ENCODE measurements at regions of chr3 and their contacts with region 1.

Region 1: GRCh38 chr3:16048435-16049318 is 125.8 kb upstream of the GALNT15 start:
- DNase-seq: peak; percentile 41 to 85
- H3K4me3 ChIP-seq: peak overlapping the region in 3 of 4 donors; percentile 9 to 29 (median 14)
- H3K27ac ChIP-seq: no peak overlapping the region
- H3K4me1 ChIP-seq: peaks cover 0 to 9% (median 2%) of the 10 kb centered on the region in 4 donors
- H3K27me3 ChIP-seq: no peaks in the 10 kb centered on the region
- CTCF ChIP-seq: peak in 5 of 7 experiments; percentile 52 to 73 (median 67)
- EP300 ChIP-seq: no peak
- POLR2A ChIP-seq: no peak

Region 2: GRCh38 chr3:15845475-15845874 is 203.2 kb before region 1 on chr3:
- intact Hi-C with region 1: no loop called
- DNase-seq: no peak
- H3K4me3 ChIP-seq: no peak overlapping the region
- H3K27ac ChIP-seq: no peak overlapping the region
- H3K4me1 ChIP-seq: peaks cover 0 to 13% (median 0%) of the 10 kb centered on the region in 4 donors
- H3K27me3 ChIP-seq: no peaks in the 10 kb centered on the region
- CTCF ChIP-seq: no peak
- EP300 ChIP-seq: no peak
- POLR2A ChIP-seq: no peak

Region 3: GRCh38 chr3:16177962-16178627 is 129.4 kb after region 1 on chr3:
- intact Hi-C with region 1: loop called (anchors 5 kb)
- DNase-seq: peak; percentile 79 to 92
- H3K4me3 ChIP-seq: peak overlapping the region; percentile 33 to 55 (median 40)
- H3K27ac ChIP-seq: no peak overlapping the region
- H3K4me1 ChIP-seq: peaks cover 5 to 33% (median 23%) of the 10 kb centered on the region in 4 donors
- H3K27me3 ChIP-seq: no peaks in the 10 kb centered on the region
- CTCF ChIP-seq: peak in 6 of 7 experiments; percentile 10 to 94 (median 92)
- EP300 ChIP-seq: no peak
- POLR2A ChIP-seq: no peak

Region 4: GRCh38 chr3:16240283-16241023 is 191.8 kb after region 1 on chr3:
- intact Hi-C with region 1: loop called (anchors 5 kb)
- DNase-seq: no peak
- H3K4me3 ChIP-seq: no peak overlapping the region
- H3K27ac ChIP-seq: peak overlapping the region in 3 of 5 donors; percentile 5 to 44 (median 13)
- H3K4me1 ChIP-seq: peaks cover 0 to 14% (median 7%) of the 10 kb centered on the region in 4 donors
- H3K27me3 ChIP-seq: no peaks in the 10 kb centered on the region
- CTCF ChIP-seq: no peak
- EP300 ChIP-seq: no peak
- POLR2A ChIP-seq: no peak

Region 5: GRCh38 chr3:16300881-16301359 is 252.2 kb after region 1 on chr3:
- intact Hi-C with region 1: no loop called
- DNase-seq: peak in 1 of 2 donors; percentile 59
- H3K4me3 ChIP-seq: no peak overlapping the region
- H3K27ac ChIP-seq: peak overlapping the region in 3 of 5 donors; percentile 44 to 61 (median 46)
- H3K4me1 ChIP-seq: peaks cover 0 to 7% (median 0%) of the 10 kb centered on the region in 4 donors
- H3K27me3 ChIP-seq: no peaks in the 10 kb centered on the region
- CTCF ChIP-seq: no peak
- EP300 ChIP-seq: no peak
- POLR2A ChIP-seq: peak in 1 of 4 donors; percentile 6